ENCODE measurements at regions of chr7 and their contacts with region 1.

Region 1: DNA sequence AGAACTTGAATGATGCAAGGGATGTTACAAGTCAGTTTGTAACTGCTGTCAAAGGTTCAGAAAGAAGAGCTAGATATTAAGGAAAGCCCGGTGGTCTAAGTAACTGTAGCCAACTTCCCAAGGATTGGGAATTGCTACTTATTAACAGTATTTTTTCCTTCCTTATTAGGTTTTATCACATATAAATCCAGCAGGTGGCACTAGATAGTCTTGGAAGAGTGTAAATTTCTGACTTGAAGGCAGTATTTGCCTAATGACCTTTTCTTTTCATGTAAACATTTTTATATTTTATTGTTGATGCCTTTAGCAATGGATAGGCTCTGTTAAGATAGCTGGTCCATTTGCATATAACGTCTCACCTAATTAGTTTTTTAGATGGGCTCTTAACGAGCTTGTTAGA is 51.2 kb downstream of the ANLN start:
- DNase-seq: peak; percentile 22
- H3K4me3 Mint-ChIP-seq: no peak overlapping the region
- H3K27ac Mint-ChIP-seq: no peak overlapping the region
- H3K4me1 Mint-ChIP-seq: no peaks in the 10 kb centered on the region
- H3K27me3 Mint-ChIP-seq: no peaks in the 10 kb centered on the region
- CTCF ChIP-seq: peak; percentile 24

Region 2: DNA sequence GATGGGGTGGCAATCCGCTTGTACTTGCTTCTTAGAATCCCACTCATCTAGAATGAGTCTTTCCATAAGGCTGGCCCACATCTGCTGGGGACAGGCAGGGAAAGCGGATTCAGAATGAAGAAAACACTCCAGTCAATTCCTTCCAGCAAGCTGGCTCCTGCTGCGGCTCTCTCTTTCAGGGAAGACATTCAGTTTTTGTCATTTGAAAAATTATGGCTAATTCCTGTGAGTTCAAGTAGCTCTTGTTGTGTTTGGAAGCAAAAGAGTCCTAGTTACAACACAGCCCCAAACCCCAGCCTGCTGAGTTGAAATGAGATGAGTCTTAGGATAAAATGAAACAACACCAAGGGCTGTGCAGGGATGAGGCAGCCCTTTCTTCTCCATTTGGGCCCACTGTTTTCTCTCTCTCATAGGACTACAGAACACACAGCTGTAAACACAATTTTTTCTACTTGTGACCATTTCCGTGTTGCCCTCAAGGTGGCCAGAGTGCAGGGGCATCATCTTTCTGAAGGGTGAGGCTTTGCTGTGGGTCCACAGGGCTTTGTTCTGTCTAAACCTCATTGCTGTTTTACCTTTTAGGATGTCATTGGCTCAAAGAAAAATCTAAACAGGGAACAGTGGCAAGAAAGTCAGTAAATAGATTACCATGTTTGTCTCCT is 378.6 kb before region 1 on chr7:
- CTCF ChIA-PET with region 1: no interaction called
- POLR2A ChIA-PET with region 1: no interaction called
- intact Hi-C with region 1: no loop called
- DNase-seq: no peak
- H3K4me3 Mint-ChIP-seq: no peak overlapping the region
- H3K27ac Mint-ChIP-seq: no peak overlapping the region
- H3K4me1 Mint-ChIP-seq: no peaks in the 10 kb centered on the region
- H3K27me3 Mint-ChIP-seq: peaks cover 42% of the 10 kb centered on the region
- CTCF ChIP-seq: no peak

Region 3: GRCh38 chr7:36280840-36281812 is 159.8 kb before region 1 on chr7:
- CTCF ChIA-PET with region 1: no interaction called
- POLR2A ChIA-PET with region 1: no interaction called
- intact Hi-C with region 1: no loop called
- DNase-seq: peak; percentile 83
- H3K4me3 Mint-ChIP-seq: no peak overlapping the region
- H3K27ac Mint-ChIP-seq: peak overlapping the region; percentile 28
- H3K4me1 Mint-ChIP-seq: peaks cover 21% of the 10 kb centered on the region
- H3K27me3 Mint-ChIP-seq: no peaks in the 10 kb centered on the region
- CTCF ChIP-seq: no peak

Region 4: GRCh38 chr7:36400630-36401029 is 40.2 kb before region 1 on chr7:
- CTCF ChIA-PET with region 1: interaction called, 11 read pairs
- POLR2A ChIA-PET with region 1: no interaction called
- intact Hi-C with region 1: no loop called
- DNase-seq: no peak
- H3K4me3 Mint-ChIP-seq: no peak overlapping the region
- H3K27ac Mint-ChIP-seq: peak overlapping the region; percentile 74
- H3K4me1 Mint-ChIP-seq: peaks cover 59% of the 10 kb centered on the region
- H3K27me3 Mint-ChIP-seq: no peaks in the 10 kb centered on the region
- CTCF ChIP-seq: no peak

Region 5: DNA sequence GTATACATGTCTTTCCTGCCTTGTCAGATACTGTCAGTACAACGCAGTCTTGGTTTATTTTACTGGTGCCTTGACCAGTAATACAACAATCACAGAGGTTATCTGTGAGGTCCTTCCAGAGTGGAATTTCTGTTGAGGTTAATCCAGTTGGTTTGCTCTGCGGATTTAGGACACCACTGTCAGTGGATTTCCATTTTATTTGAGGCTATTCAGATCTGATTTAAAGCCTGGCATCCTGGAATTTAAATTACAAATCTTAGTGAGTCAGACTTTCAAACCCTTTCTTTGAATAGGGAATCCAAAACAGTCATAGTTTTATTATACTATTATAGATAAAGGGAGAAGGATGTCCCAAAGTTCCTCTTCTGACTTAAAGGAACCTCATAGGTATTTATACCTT is 10.7 kb before region 1 on chr7:
- CTCF ChIA-PET with region 1: interaction called, 33 read pairs
- POLR2A ChIA-PET with region 1: interaction called, 4 read pairs
- intact Hi-C with region 1: no loop called
- DNase-seq: no peak
- H3K4me3 Mint-ChIP-seq: no peak overlapping the region
- H3K27ac Mint-ChIP-seq: peak overlapping the region; percentile 23
- H3K4me1 Mint-ChIP-seq: peaks cover 5% of the 10 kb centered on the region
- H3K27me3 Mint-ChIP-seq: no peaks in the 10 kb centered on the region
- CTCF ChIP-seq: no peak

Region 6: GRCh38 chr7:36473454-36474282 is 32.8 kb after region 1 on chr7:
- CTCF ChIA-PET with region 1: interaction called, 46 read pairs
- POLR2A ChIA-PET with region 1: interaction called, 4 read pairs
- intact Hi-C with region 1: no loop called
- DNase-seq: peak; percentile 91
- H3K4me3 Mint-ChIP-seq: peak overlapping the region; percentile 20
- H3K27ac Mint-ChIP-seq: peak overlapping the region; percentile 14
- H3K4me1 Mint-ChIP-seq: peaks cover 19% of the 10 kb centered on the region
- H3K27me3 Mint-ChIP-seq: no peaks in the 10 kb centered on the region
- CTCF ChIP-seq: peak; percentile 39

Region 7: GRCh38 chr7:37181550-37181932 is 740.7 kb after region 1 on chr7:
- CTCF ChIA-PET with region 1: interaction called, 55 read pairs
- POLR2A ChIA-PET with region 1: no interaction called
- intact Hi-C with region 1: loop called (anchors 1 kb)
- DNase-seq: no peak
- H3K4me3 Mint-ChIP-seq: no peak overlapping the region
- H3K27ac Mint-ChIP-seq: no peak overlapping the region
- H3K4me1 Mint-ChIP-seq: no peaks in the 10 kb centered on the region
- H3K27me3 Mint-ChIP-seq: peaks cover 10% of the 10 kb centered on the region
- CTCF ChIP-seq: no peak

Measured in MCF 10A (cell line).